Esophagus muscularis mucosa (tissue), 4 donors: ENCODE measurements at regions of chr9 and their contacts with region 1.

Region 1: DNA sequence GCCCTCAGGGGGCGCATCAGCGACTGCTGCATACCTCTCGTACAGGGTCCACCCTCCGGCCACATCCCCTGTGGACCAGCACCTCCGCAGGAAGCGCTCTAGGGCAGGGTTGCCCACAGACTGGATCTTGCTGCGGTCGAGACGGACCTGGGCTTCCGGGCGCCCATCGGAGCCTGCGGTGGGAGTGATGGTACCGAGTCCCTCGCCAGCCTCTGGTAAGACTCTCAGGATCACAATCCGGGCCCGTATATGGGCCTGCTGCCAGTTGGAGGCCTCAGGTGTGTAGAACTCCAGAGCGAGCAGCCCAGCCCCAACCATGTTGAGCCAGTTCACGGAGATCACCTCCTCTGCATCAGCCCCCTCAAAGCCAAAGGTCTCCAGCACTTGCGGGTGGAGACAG is 323.0 kb downstream of the ANXA1 start:
- DNase-seq: no peak
- H3K4me3 ChIP-seq: no peak overlapping the region
- H3K27ac ChIP-seq: no peak overlapping the region
- H3K4me1 ChIP-seq: no peaks in the 10 kb centered on the region
- H3K27me3 ChIP-seq: no peaks in the 10 kb centered on the region
- CTCF ChIP-seq: no peak
- EP300 ChIP-seq: no peak
- POLR2A ChIP-seq: no peak

Region 2: GRCh38 chr9:73527521-73527920 is 52.9 kb after region 1 on chr9:
- intact Hi-C with region 1: loop called (anchors 5 kb)
- DNase-seq: no peak
- H3K4me3 ChIP-seq: no peak overlapping the region
- H3K27ac ChIP-seq: no peak overlapping the region
- H3K4me1 ChIP-seq: no peaks in the 10 kb centered on the region
- H3K27me3 ChIP-seq: no peaks in the 10 kb centered on the region
- CTCF ChIP-seq: no peak
- EP300 ChIP-seq: no peak
- POLR2A ChIP-seq: no peak